Aorta (tissue), 5 donors: ENCODE measurements at regions of chr20 and their contacts with region 1.

Region 1: DNA sequence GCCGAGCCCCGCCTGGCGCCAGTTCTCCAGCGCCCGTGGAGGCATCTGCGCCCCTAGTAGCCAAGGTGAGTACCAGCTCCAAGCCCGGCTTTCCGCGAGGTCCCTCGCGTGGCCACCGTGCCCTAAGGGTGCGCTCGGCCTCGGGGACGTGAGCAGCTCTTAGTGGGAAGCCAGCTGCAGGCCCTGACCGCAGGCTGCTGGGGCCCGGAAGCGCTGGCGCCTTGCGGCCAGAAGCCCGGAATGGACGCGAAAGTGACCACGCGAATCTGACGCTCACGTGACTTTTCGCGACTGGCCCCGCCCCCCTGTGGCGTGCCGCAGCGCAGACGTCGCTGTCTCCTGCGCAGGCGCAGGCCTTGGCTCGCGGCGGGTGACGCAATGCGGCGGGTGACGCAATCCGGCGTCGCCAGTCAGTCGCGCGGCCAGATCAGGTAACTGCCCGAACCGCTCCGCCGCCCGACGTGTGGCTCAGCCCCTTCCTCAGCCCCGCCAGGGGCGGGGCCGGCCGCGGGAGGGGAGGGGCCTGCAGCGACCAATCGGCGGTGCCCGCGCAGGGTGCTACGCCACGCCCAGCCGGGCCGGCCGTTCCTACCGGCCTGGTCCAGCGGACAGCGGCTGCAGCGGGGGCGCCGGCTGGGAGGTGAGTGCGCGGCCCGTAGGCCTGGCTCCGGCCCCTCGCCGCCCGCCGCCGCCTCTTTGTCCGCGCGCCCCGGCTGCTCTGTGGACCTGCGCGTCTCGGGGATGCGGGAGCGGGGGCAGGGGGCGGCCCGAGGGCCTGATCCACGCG is at the start of gene GZF1:
- DNase-seq: peak; percentile 98 to 100
- ATAC-seq: peak; percentile 96
- H3K4me3 ChIP-seq: peak within 1 kb of the TSS; percentile 44 to 63
- H3K27ac ChIP-seq: peak within 1 kb of the TSS; percentile 97 to 98
- H3K4me1 ChIP-seq: no peaks in the 10 kb centered on the region
- H3K27me3 ChIP-seq: no peaks in the 10 kb centered on the region
- total RNA-seq, gene GZF1: 13.2 to 19.5 TPM

Region 2: DNA sequence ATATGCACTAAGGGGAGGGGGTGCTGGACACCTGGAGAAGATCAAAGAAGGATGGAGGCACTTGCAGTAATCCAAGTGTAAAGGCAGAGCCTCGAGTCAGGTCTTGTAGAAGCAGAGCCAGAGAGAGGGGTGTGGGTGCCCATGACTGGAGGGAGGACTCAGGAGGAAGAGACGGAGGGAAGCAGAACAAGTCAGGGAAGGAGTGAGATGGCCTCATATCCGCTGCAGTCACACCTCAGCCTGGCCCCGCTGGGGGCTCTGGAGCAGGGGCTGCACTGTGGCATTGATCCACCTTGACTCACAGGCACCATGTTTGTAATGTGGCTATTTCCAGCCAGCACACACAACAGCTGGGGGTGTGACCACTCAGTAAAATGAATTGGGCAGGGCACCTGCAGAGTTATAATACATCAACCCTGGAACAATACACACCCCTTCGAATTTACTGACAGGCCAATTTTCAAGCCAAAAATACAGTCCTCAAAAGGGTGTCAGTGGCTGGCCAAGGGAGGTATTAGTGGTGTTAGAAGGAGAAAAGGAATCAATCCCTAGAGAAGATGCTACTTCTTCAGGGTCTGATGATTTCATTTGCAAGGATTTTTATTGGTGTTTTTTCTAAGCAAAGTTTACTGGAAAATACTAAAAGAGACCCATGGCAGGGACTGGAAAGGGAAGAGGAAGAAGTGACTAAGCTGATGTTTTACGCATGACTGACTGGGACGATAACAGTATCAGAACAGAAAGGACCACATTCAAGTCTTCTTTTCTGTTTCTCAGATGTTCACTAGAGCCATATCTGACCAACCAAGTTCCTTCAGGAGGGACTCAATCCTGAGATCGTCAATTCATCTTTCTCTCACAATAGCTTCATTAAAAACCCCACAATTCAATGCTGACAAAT is 30.1 kb before region 1 on chr20:
- intact Hi-C with region 1: no loop called
- DNase-seq: no peak
- ATAC-seq: no peak
- H3K4me3 ChIP-seq: no peak overlapping the region
- H3K27ac ChIP-seq: no peak overlapping the region
- H3K4me1 ChIP-seq: no peaks in the 10 kb centered on the region
- H3K27me3 ChIP-seq: no peaks in the 10 kb centered on the region

Region 3: GRCh38 chr20:23420943-23421931 is 59.4 kb after region 1 on chr20 and contains the start of gene NAPB:
- intact Hi-C with region 1: loop called in 1 of 2 experiments (anchors 5 kb)
- DNase-seq: peak; percentile 97 to 99
- ATAC-seq: peak; percentile 99
- H3K4me3 ChIP-seq: peak within 1 kb of the TSS; percentile 81 to 83
- H3K27ac ChIP-seq: peak within 1 kb of the TSS; percentile 18 to 61
- H3K4me1 ChIP-seq: peaks cover 0 to 3% of the 10 kb centered on the region in 2 donors
- H3K27me3 ChIP-seq: no peaks in the 10 kb centered on the region
- total RNA-seq, gene NAPB: 10.6 to 15.2 TPM

Region 4: DNA sequence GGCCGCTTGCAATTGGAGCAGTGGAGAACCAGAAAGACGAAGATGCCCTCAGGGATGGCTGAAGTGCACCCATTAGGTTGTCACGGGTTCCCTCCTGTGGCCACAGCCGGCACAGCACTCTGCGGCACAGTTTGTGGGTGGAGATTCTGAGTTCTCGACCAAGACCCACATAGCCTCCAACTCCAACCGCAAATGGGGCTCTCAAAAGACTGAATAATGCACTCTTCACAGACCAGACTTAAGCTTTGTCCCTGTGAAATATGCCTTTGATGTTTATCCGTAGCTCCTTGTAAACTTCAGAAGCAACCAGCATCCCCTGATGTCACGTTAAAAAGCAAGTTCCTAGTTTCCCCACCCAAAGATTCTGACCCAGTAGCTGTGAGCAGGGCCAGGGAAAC is 244.9 kb after region 1 on chr20:
- intact Hi-C with region 1: loop called in 1 of 2 experiments (anchors 10 kb)
- DNase-seq: peak; percentile 86 to 94
- ATAC-seq: peak; percentile 86
- H3K4me3 ChIP-seq: no peak overlapping the region
- H3K27ac ChIP-seq: no peak overlapping the region
- H3K4me1 ChIP-seq: no peaks in the 10 kb centered on the region
- H3K27me3 ChIP-seq: no peaks in the 10 kb centered on the region